Calu3 (cell line): ENCODE measurements at regions of chr9 and their contacts with region 1.

Region 1: DNA sequence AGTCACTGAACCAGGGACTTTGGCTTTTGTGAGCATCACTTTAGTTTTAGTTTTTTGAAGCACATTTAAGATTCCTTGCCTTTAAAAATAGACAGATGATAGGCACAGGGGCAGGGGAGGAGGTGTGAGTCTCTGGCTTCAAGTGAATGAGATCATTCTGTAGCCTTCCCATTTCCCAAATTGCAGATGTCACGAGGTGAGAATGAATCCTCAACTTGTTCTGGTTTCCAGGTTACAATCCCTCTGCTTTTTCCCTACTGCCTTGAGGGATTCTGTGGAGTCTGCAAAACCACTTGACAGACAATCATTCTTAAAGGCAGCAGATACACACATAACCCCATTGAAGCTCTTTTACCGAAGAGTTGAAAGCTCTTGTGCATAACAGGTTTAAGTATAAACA is 332.4 kb downstream of the DMAC1 start:
- DNase-seq: no peak
- H3K4me3 Mint-ChIP-seq: no peak overlapping the region
- H3K27ac Mint-ChIP-seq: no peak overlapping the region
- H3K4me1 Mint-ChIP-seq: no peaks in the 10 kb centered on the region
- H3K27me3 Mint-ChIP-seq: peaks cover 18% of the 10 kb centered on the region
- CTCF ChIP-seq: no peak

Region 2: GRCh38 chr9:7500521-7500920 is 33.3 kb after region 1 on chr9:
- CTCF ChIA-PET with region 1: no interaction called
- intact Hi-C with region 1: loop called (anchors 1 kb)
- DNase-seq: no peak
- H3K4me3 Mint-ChIP-seq: no peak overlapping the region
- H3K27ac Mint-ChIP-seq: no peak overlapping the region
- H3K4me1 Mint-ChIP-seq: no peaks in the 10 kb centered on the region
- H3K27me3 Mint-ChIP-seq: peaks cover 40% of the 10 kb centered on the region
- CTCF ChIP-seq: no peak

Region 3: GRCh38 chr9:7523426-7524043 is 56.3 kb after region 1 on chr9:
- CTCF ChIA-PET with region 1: no interaction called
- intact Hi-C with region 1: no loop called
- DNase-seq: no peak
- H3K4me3 Mint-ChIP-seq: no peak overlapping the region
- H3K27ac Mint-ChIP-seq: no peak overlapping the region
- H3K4me1 Mint-ChIP-seq: no peaks in the 10 kb centered on the region
- H3K27me3 Mint-ChIP-seq: peaks cover 17% of the 10 kb centered on the region
- CTCF ChIP-seq: no peak